Breast epithelium (tissue), 4 donors: ENCODE measurements at regions of chrX and their contacts with region 1.

Region 1: GRCh38 chrX:3312109-3312508 is 34.3 kb downstream of the MXRA5 start:
- DNase-seq: no peak
- H3K4me3 ChIP-seq: no peak overlapping the region
- H3K27ac ChIP-seq: no peak overlapping the region
- H3K4me1 ChIP-seq: no peaks in the 10 kb centered on the region
- H3K27me3 ChIP-seq: no peaks in the 10 kb centered on the region
- CTCF ChIP-seq: no peak
- POLR2A ChIP-seq: no peak

Region 2: GRCh38 chrX:3348216-3348615 is 36.1 kb after region 1 on chrX:
- intact Hi-C with region 1: loop called (anchors 2 kb)
- DNase-seq: no peak
- H3K4me3 ChIP-seq: no peak overlapping the region
- H3K27ac ChIP-seq: no peak overlapping the region
- H3K4me1 ChIP-seq: peaks cover 0 to 3% of the 10 kb centered on the region in 2 donors
- H3K27me3 ChIP-seq: peaks cover 0 to 19% of the 10 kb centered on the region in 2 donors
- CTCF ChIP-seq: no peak
- POLR2A ChIP-seq: no peak

Region 3: GRCh38 chrX:3362956-3363355 is 50.8 kb after region 1 on chrX:
- intact Hi-C with region 1: no loop called
- DNase-seq: peak in 1 of 2 donors; percentile 45
- H3K4me3 ChIP-seq: no peak overlapping the region
- H3K27ac ChIP-seq: no peak overlapping the region
- H3K4me1 ChIP-seq: no peaks in the 10 kb centered on the region
- H3K27me3 ChIP-seq: peaks cover 0 to 4% of the 10 kb centered on the region in 2 donors
- CTCF ChIP-seq: no peak
- POLR2A ChIP-seq: no peak